ENCODE measurements at regions of chr2 and their contacts with region 1.

Region 1: GRCh38 chr2:12430407-12431133 is 286.2 kb upstream of the TRIB2 start:
- DNase-seq: peak in 2 of 4 experiments; percentile 30 to 45
- ATAC-seq: peak; percentile 77
- H3K4me3 ChIP-seq: no peak overlapping the region
- H3K27ac ChIP-seq: peak overlapping the region; percentile 54
- H3K4me1 ChIP-seq: peaks cover 15 to 25% of the 10 kb centered on the region in 2 experiments
- H3K27me3 ChIP-seq: no peaks in the 10 kb centered on the region
- CTCF ChIP-seq: no peak
- EP300 ChIP-seq: no peak
- POLR2A ChIP-seq: no peak
- RAD21 ChIP-seq: no peak

Region 2: DNA sequence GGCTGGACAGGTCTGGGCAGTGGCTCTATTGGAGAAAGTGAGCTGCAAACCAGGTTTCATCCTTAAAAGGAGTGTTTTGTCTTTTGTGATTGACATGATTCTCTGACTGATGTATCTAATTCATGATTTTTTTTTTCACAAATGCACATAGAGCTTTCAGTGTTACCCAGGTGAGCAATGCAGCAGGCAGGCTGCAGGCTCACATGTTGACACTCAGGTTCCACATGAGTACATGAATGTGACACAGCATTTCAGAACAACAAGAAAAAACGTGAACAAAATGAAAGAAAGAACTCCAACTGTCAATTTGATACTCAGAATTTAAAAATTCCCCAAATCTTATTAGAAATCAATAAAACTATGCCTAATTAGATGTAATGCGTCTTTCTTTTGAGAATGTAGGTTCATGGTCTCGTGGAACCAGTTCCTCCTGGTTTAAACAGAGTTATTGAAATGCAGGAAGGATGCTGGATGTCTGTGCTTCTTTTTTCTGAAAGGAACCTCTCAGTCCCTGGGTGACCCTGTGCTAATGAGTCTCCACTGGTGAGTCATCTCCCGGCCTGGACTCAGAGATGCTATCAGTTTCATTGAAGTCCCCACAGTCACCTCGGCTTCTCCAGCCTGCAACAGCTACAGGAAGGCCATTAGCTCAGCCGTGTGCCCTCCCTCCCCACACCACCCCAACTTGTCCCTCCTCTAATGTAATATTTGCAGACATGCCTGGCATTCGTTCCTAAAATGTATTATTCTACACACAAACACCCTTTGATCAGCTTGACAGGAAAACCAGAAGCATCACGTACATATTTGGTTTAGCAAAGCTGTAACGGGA is 253.7 kb before region 1 on chr2:
- CTCF ChIA-PET with region 1: no interaction called
- POLR2A ChIA-PET with region 1: no interaction called
- in situ Hi-C with region 1: no loop called
- intact Hi-C with region 1: loop called (anchors 10 kb)
- DNase-seq: peak; percentile 88 to 94 (median 91)
- ATAC-seq: peak; percentile 97
- H3K4me3 ChIP-seq: no peak overlapping the region
- H3K27ac ChIP-seq: peak overlapping the region; percentile 70
- H3K4me1 ChIP-seq: peaks cover 21 to 32% of the 10 kb centered on the region in 2 experiments
- H3K27me3 ChIP-seq: no peaks in the 10 kb centered on the region
- CTCF ChIP-seq: no peak
- EP300 ChIP-seq: peak; percentile 85
- POLR2A ChIP-seq: no peak
- RAD21 ChIP-seq: peak; percentile 12 to 23; a peak in 2 of 4 replicates

Region 3: DNA sequence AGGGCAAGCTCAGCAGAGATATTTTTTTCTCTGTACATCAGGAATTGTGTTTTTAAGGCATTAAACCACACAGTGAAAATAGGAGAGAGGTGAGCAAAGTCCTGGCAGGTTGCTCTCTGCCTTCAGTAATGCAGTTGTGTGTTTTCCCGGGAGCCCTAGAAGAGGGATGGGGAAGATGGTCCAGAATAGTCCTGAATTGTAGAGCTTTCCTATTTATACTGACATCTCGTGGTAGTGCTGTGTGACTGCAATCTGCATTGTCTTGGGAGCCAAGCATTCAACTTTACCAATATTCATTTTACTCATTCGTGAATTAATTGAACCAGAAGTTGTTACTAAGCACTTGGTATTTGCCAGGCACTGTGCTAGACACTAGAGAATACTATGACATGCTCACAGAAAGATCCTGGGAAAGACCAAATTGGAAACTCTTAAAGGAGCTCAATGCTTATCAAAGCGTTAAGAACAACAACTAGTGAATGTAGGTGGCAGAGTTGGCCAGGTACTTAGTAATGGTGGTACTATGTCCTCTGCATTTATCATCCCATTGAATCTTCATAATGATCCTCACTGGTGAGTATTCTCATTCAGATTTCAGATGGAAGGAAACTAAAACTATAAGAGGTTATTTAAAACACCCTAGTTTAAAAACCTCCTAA is 500.7 kb after region 1 on chr2:
- CTCF ChIA-PET with region 1: no interaction called
- POLR2A ChIA-PET with region 1: no interaction called
- in situ Hi-C with region 1: no loop called
- intact Hi-C with region 1: loop called (anchors 5 kb)
- DNase-seq: peak in 3 of 4 experiments; percentile 9 to 44 (median 27)
- ATAC-seq: peak; percentile 84
- H3K4me3 ChIP-seq: no peak overlapping the region
- H3K27ac ChIP-seq: no peak overlapping the region
- H3K4me1 ChIP-seq: no peaks in the 10 kb centered on the region; a peak in 2 of 5 replicates
- H3K27me3 ChIP-seq: peaks cover 0 to 3% of the 10 kb centered on the region in 2 experiments; a peak in 1 of 5 replicates
- CTCF ChIP-seq: peak; percentile 58 to 69 (median 68)
- EP300 ChIP-seq: no peak
- POLR2A ChIP-seq: no peak
- RAD21 ChIP-seq: peak; percentile 56 to 71